Psoas muscle (tissue), 8 donors: ENCODE measurements at regions of chr10 and their contacts with region 1.

Region 1: GRCh38 chr10:62121187-62121530 is 147.5 kb downstream of the RTKN2 start:
- DNase-seq: no peak
- ATAC-seq: no peak
- H3K4me3 ChIP-seq: no peak overlapping the region
- H3K27ac ChIP-seq: no peak overlapping the region
- H3K4me1 ChIP-seq: no peaks in the 10 kb centered on the region
- H3K27me3 ChIP-seq: no peaks in the 10 kb centered on the region
- CTCF ChIP-seq: no peak

Region 2: DNA sequence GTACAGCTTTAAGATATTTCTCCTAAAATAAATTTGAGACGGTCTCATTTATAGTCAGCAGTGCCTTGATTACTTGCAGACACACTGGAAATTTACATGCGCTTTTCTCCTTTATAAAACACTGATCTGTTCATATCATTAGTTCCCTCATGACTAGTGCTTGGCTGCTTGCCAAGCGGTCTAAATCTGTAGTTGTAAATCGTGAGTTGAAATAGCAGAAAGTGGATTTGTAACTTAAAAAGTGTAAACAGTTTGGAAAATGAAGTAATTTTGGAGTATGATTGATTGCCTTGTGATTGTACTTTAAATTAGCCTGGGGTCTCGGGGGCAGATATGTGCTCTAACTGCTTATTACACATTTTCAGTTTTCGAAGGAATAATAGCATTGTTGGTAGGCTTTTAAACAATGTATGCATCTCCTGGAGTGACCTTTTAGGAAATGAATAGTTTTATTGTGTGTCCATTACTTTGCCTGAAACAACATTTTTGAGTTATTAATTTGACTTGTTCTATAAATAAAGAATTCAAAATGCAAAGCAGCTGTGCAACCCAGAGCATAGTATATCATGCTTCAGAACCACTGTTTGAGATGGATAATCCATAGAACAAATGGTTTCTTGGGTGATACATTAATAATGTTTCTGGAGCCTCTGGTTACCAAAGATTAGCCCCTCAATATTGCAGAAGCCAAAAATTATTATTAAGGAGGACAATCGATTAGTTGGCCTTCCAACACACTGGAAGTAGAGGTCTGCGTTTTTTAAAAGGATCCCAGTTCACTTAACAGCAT is 146.4 kb before region 1 on chr10:
- intact Hi-C with region 1: no loop called
- DNase-seq: peak; percentile 32 to 58
- ATAC-seq: peak in 3 of 4 donors; percentile 39 to 67 (median 44)
- H3K4me3 ChIP-seq: peak overlapping the region; percentile 38
- H3K27ac ChIP-seq: peak overlapping the region; percentile 74
- H3K4me1 ChIP-seq: peaks cover 40% of the 10 kb centered on the region
- H3K27me3 ChIP-seq: no peaks in the 10 kb centered on the region
- CTCF ChIP-seq: no peak

Region 3: GRCh38 chr10:62199584-62199983 is 78.4 kb after region 1 on chr10:
- intact Hi-C with region 1: loop called in 1 of 2 experiments (anchors 10 kb)
- DNase-seq: no peak
- ATAC-seq: no peak
- H3K4me3 ChIP-seq: no peak overlapping the region
- H3K27ac ChIP-seq: no peak overlapping the region
- H3K4me1 ChIP-seq: no peaks in the 10 kb centered on the region
- H3K27me3 ChIP-seq: no peaks in the 10 kb centered on the region
- CTCF ChIP-seq: no peak